ENCODE measurements at regions of chrX and their contacts with region 1.

Region 1: DNA sequence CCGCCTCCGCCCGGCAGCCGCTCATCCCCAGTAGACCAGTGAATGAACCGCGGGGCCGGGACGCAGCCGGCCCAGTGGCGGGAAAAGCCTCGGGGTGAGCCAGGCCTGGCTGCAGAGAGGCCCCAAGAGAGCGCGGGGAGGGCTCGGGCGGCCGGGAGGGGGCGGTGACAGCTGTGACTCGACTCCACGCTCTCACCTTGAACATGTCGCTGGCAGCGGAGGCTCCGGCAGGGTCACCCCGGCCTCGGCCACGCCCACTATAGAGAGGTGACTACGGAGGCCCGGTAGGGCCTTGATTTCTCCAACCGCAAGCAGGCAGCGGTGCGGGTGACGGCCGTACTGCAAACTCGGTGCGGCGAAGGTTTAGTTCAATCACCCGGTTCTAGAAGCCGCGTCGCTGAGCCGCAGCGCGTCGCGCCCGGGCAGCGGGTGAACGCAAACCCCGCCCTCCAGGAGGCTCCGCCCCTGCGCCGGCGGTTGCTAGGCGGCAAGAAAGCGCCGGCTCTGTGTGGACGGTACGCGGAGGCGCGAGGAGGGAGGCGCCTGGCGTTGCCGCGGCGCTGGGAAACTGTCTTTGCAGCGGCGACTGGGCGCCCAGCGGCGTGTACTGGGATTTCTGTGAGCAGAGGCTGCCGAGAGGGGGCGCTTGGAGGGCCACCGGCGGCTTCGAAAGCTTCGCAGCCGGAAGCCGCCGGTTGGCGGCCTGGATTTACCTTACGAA is at the starts of genes APOO and CXorf58:
- DNase-seq: peak; percentile 92 to 97 (median 96)
- ATAC-seq: peak; percentile 98 to 99
- H3K4me3 ChIP-seq: peak within 1 kb of the TSS; percentile 67
- H3K27ac ChIP-seq: peak within 1 kb of the TSS; percentile 68
- H3K4me1 ChIP-seq: no peaks in the 10 kb centered on the region
- H3K27me3 ChIP-seq: no peaks in the 10 kb centered on the region
- total RNA-seq, gene APOO: 65.7 to 88.9 (median 83.1) TPM
- total RNA-seq, gene CXorf58: 0.31 to 0.65 (median 0.45) TPM in 3 of 4 donors, not detected in the other

Region 2: GRCh38 chrX:23694606-23695005 is 213.1 kb before region 1 on chrX:
- intact Hi-C with region 1: loop called (anchors 5 to 10 kb)
- DNase-seq: peak; percentile 50 to 82 (median 75)
- ATAC-seq: peak; percentile 59 to 69
- H3K4me3 ChIP-seq: no peak overlapping the region
- H3K27ac ChIP-seq: no peak overlapping the region
- H3K4me1 ChIP-seq: no peaks in the 10 kb centered on the region
- H3K27me3 ChIP-seq: no peaks in the 10 kb centered on the region

Region 3: DNA sequence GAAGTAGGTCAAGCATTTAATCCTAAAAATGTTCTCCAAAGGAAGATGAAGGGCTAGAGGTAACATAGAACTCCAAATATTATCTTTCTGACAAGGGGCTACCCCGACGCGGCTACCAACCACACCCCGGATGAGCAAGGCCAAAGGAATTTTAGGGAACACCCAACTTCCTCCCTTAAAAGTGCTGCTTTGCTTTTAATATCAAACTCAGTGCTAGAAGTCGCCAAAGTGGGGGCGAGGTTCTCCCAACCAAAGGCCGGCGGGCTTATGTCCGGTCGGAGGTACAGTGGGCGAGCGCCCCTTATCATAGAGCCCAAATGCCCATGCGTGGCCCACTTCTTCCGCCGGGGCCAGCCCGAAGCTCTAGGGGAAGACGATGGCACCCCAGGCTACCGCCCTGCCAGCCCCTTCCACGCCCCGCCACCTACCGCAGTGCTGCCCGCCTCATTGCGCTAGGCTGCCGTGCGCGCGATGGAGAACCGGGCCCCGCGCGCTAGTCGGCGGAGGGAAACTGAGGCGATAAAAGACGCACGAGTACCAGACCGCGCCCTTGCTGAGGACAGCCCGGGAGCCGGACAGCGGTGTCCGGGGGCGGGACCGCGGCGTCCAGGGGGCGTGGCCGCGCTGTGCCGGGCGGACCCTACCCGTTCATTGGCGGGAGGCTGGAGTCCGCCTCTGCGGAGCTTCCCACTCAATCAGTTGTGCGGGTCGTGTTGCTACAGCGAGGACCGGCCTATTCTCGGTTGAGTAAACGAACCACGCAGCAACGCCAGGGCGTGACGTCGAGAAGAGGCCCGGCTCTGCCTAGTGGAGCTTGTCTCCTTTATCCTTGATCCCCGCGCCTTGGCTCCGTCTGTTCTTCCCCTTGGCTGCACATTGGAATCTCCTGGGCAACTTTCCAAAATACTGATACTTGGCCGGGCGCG is 164.7 kb before region 1 on chrX and contains the start of gene ACOT9:
- intact Hi-C with region 1: loop called in 1 of 4 experiments (anchors 10 kb)
- DNase-seq: peak; percentile 96 to 98 (median 97)
- ATAC-seq: peak; percentile 99
- H3K4me3 ChIP-seq: peak within 1 kb of the TSS; percentile 79
- H3K27ac ChIP-seq: peak within 1 kb of the TSS; percentile 98
- H3K4me1 ChIP-seq: no peaks in the 10 kb centered on the region
- H3K27me3 ChIP-seq: no peaks in the 10 kb centered on the region
- total RNA-seq, gene ACOT9: 33.5 to 50.2 (median 38.3) TPM

Region 4: DNA sequence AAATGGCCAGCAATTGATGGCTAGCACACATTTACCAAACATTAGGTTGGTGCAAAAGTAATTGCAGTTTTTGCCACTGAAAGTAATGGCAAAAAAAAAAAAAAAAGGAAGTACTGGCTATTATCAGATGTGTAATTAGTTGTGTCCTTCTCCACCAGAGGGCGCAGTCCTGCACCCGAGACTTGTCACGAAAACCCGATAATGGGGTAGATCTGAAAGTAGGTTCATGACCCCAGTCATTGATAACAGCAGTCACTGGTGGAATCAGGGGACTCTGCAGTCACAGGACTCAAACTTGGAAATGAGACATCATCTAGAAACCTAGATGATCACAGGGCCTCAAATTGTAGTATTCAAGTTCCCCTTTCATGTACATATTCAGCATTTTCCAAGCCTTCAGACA is 151.5 kb before region 1 on chrX:
- intact Hi-C with region 1: loop called in 1 of 4 experiments (anchors 10 kb)
- DNase-seq: peak in 2 of 3 donors; percentile 60 to 78
- ATAC-seq: no peak
- H3K4me3 ChIP-seq: no peak overlapping the region
- H3K27ac ChIP-seq: no peak overlapping the region
- H3K4me1 ChIP-seq: no peaks in the 10 kb centered on the region
- H3K27me3 ChIP-seq: no peaks in the 10 kb centered on the region

Region 5: DNA sequence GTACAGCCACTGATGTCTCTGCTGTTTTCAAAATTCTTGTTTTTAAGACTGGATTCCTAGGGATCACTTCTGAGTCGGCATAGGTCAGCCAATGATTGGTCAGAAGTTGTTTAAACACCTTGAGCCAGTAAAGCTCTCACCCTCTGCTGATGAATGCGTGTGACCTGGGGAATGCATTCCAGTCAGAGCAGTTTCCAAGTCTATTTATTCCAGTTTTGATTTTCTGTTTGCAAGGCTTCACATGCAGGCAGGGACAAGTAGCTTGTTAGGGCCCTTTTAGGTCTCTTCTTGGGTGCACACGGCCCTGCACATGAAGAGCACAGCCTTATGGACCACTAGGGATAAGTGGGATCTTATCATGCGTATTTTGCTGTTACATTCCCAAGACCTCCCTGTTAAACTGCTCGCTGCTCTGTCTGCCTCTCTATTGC is 72.4 kb after region 1 on chrX:
- intact Hi-C with region 1: no loop called
- DNase-seq: no peak
- ATAC-seq: no peak
- H3K4me3 ChIP-seq: no peak overlapping the region
- H3K27ac ChIP-seq: no peak overlapping the region
- H3K4me1 ChIP-seq: no peaks in the 10 kb centered on the region
- H3K27me3 ChIP-seq: no peaks in the 10 kb centered on the region

Region 6: DNA sequence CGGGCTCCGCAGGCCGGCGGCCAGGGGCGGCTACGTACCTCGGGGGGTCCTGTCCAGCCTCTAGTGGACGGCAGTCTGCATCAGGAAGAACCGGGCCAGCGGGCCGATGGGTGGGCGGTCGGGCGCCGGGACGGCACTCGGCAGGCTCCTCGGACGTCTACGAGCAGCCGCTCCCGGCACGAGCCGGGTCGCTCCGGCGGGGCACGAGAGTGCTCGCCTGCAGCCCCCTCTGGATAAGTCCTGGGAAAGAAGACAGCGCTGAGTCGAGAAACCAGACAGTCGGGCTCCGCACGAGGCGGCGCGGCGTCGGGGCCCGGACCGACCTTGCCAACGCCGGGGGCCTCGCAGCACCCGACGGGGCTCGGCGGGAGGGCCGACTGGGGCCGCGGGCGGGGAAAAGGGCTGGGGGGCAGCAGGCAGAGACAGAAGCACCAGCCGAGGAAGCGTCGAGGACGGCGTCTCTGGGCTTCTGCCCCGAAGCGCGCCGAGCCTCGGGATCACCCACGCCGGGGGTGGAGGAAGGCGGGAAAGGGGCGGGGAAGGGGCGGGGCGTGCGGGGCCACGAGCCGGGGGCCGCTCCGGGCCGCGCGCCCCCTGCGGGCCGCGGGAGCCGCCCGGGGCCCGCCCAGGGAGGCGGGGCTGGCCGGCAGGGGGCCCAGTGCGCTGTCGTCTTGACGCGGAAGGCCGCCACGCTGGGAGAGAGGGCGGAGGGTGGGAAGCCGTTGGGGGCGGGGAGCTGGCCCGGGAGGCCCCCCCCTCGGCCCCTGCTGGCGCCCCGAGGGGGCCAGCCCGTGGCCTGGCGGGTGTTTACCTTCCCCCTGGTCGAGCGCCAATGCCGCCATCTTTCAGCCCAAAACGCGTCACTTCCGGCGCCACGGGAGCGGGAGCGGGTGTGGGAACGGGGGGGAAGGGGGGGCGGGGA is 117.4 kb after region 1 on chrX:
- intact Hi-C with region 1: loop called in 1 of 4 experiments (anchors 10 kb)
- DNase-seq: peak; percentile 88 to 96 (median 94)
- ATAC-seq: peak; percentile 96 to 98
- H3K4me3 ChIP-seq: peak overlapping the region; percentile 98
- H3K27ac ChIP-seq: peak overlapping the region; percentile 93
- H3K4me1 ChIP-seq: no peaks in the 10 kb centered on the region
- H3K27me3 ChIP-seq: no peaks in the 10 kb centered on the region